Activated CD4-positive, alpha-beta T cell treated with anti-CD3 and anti-CD28 coated beads for 36 hours (primary cell): ENCODE measurements at regions of chr16 and their contacts with region 1.

Region 1: GRCh38 chr16:69132424-69133252 is at the starts of genes CHTF8 and UTP4:
- DNase-seq: peak; percentile 94
- ATAC-seq: peak; percentile 95
- H3K4me3 Mint-ChIP-seq: peak within 1 kb of the TSS; percentile 93
- H3K27ac Mint-ChIP-seq: peak within 1 kb of the TSS; percentile 93
- H3K4me1 Mint-ChIP-seq: peaks cover 59% of the 10 kb centered on the region
- H3K27me3 Mint-ChIP-seq: no peaks in the 10 kb centered on the region
- total RNA-seq, gene CHTF8: 153 to 194 TPM
- total RNA-seq, gene UTP4: 102 to 119 TPM

Region 2: GRCh38 chr16:68528686-68529379 is 603.8 kb before region 1 on chr16:
- CTCF ChIA-PET with region 1: interaction called, 5 read pairs
- POLR2A ChIA-PET with region 1: no interaction called
- intact Hi-C with region 1: loop called (anchors 1 to 5 kb)
- DNase-seq: peak; percentile 94
- ATAC-seq: peak; percentile 85
- H3K4me3 Mint-ChIP-seq: peak overlapping the region; percentile 55
- H3K27ac Mint-ChIP-seq: no peak overlapping the region
- H3K4me1 Mint-ChIP-seq: peaks cover 13% of the 10 kb centered on the region
- H3K27me3 Mint-ChIP-seq: no peaks in the 10 kb centered on the region

Region 3: GRCh38 chr16:68848786-68849185 is 283.9 kb before region 1 on chr16:
- CTCF ChIA-PET with region 1: interaction called, 4 read pairs
- POLR2A ChIA-PET with region 1: no interaction called
- intact Hi-C with region 1: loop called (anchors 1 to 5 kb)
- DNase-seq: no peak
- ATAC-seq: no peak
- H3K4me3 Mint-ChIP-seq: no peak overlapping the region
- H3K27ac Mint-ChIP-seq: no peak overlapping the region
- H3K4me1 Mint-ChIP-seq: peaks cover 26% of the 10 kb centered on the region
- H3K27me3 Mint-ChIP-seq: no peaks in the 10 kb centered on the region

Region 4: DNA sequence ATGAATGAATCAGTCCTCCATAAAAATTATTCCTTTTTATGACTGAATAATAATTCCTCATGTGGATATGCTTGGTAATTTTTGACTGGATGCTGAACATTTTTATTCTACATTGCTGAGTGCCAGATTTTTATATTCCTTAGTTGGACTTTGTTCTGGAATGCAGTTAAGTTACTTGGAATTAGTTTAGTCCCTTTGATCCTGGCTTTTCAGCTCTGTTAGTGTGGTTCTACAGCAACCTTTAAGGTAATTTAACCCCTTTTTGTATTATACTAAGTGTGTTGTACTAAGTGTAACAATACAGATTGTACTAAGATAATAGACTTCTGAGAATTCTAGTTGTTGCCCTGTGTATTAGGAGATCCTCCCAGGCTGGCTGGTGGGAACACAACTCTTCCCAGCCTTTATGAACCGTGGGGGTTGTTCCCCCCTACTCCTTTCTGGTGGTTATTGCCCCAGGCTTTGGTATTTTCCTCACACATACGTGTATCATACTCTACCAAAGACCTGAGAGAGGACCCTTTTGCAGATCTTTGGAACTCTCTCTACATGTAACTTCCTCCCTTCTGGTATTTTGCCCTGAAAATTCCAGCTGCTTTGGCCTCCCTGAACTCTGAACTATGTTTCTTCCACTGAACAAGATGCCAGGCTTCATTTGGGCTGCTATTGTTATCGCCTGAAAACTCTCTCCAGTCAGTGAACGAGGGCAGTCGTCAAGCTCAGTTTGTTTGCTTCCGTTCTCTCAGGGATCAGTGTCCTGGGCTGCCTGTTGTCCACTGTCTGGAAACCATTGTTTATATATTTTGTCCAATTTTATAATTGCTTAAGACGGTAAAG is 258.8 kb before region 1 on chr16:
- CTCF ChIA-PET with region 1: no interaction called
- POLR2A ChIA-PET with region 1: no interaction called
- intact Hi-C with region 1: no loop called
- DNase-seq: no peak
- ATAC-seq: no peak
- H3K4me3 Mint-ChIP-seq: no peak overlapping the region
- H3K27ac Mint-ChIP-seq: no peak overlapping the region
- H3K4me1 Mint-ChIP-seq: no peaks in the 10 kb centered on the region
- H3K27me3 Mint-ChIP-seq: no peaks in the 10 kb centered on the region

Region 5: DNA sequence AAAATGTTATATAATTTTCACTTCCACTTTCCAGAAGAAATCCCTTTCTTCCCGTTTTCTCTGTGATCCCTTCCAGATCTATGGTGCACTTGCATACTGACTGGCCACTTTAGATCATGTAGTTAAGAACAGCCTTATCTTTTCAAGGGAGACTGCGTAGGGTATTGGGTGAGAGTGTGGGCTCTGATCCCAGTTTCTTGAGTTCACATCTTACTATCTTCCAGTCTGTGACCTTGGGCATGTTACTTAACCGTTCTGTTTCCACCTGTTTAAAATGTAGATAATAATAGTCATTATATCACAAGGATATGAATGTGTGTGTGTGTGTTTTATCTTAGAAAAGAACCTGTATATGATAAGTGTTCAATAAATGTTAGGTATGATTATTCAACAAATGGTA is 205.6 kb before region 1 on chr16:
- CTCF ChIA-PET with region 1: no interaction called
- POLR2A ChIA-PET with region 1: no interaction called
- intact Hi-C with region 1: no loop called
- DNase-seq: no peak
- ATAC-seq: no peak
- H3K4me3 Mint-ChIP-seq: no peak overlapping the region
- H3K27ac Mint-ChIP-seq: no peak overlapping the region
- H3K4me1 Mint-ChIP-seq: no peaks in the 10 kb centered on the region
- H3K27me3 Mint-ChIP-seq: no peaks in the 10 kb centered on the region

Region 6: DNA sequence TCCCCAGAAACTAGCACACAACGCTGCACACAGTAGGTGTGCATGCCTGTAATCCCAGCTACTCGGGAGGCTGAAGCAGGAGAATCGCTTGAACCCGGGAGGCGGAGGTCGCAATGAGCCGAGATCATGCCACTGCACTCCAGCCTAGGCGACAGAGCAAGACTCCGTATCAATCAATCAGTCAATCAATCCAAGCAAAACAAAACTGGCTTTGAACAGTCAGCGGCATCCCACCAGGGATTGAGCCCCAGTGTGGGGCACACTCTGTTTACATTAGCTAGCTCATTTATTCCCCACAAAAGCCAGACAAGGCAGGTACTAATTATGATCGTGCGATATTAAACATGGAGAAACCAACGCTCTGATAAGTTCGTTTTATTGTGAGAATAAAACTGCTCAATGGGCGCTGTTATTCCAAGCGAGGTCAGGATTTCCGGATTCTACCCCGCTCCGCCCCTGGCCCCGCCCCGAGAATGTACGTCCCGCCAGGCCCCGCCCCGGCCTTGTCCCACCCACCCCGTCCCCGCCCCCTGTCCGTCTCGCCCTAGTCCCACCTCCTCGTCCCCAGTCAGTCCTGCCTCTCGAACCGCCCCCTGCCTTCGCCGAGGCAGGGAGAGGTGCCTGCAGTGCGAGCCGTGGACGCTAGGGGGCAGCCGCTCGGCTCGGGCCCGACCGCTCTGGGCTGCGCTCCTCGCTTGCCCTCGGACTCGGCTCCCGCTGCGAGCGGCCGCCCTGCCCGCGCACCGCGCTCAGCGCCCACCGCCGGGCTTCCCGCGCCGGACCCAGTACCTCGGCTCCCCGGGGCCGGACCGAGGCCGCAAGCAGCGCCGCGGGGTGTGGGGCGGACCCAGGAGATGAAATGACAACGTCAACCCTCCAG is 178.3 kb after region 1 on chr16 and contains the start of gene VPS4A:
- CTCF ChIA-PET with region 1: no interaction called
- POLR2A ChIA-PET with region 1: no interaction called
- intact Hi-C with region 1: loop called in 1 of 2 experiments (anchors 1 kb)
- DNase-seq: peak; percentile 98
- ATAC-seq: peak; percentile 97
- H3K4me3 Mint-ChIP-seq: peak within 1 kb of the TSS; percentile 100
- H3K27ac Mint-ChIP-seq: peak within 1 kb of the TSS; percentile 97
- H3K4me1 Mint-ChIP-seq: peaks cover 26% of the 10 kb centered on the region
- H3K27me3 Mint-ChIP-seq: no peaks in the 10 kb centered on the region
- total RNA-seq, gene VPS4A: 28.4 to 31.9 TPM

Region 7: DNA sequence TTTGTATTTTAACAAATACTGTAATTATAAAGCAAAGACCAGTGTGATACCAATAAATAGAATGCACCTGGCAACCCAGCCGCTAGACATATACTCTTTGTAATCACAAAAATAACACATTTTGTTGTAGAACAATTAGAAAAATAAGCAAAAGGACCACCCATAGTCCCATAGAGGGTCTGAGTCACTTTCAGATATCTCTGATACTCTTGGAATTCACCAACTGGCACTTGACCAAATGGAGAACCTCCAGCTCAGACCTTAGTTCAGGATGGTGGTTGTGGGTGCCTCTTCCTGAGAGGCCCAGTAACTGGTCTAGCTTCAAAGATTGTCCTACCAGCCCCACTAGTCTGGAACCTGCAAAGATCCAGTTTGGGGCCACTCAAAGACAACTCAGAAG is 254.0 kb after region 1 on chr16:
- CTCF ChIA-PET with region 1: no interaction called
- POLR2A ChIA-PET with region 1: no interaction called
- intact Hi-C with region 1: loop called in 1 of 2 experiments (anchors 1 kb)
- DNase-seq: no peak
- ATAC-seq: no peak
- H3K4me3 Mint-ChIP-seq: peak overlapping the region; percentile 100
- H3K27ac Mint-ChIP-seq: peak overlapping the region; percentile 55
- H3K4me1 Mint-ChIP-seq: peaks cover 29% of the 10 kb centered on the region
- H3K27me3 Mint-ChIP-seq: no peaks in the 10 kb centered on the region